Heart left ventricle (tissue), 16 donors: ENCODE measurements at regions of chr1 and their contacts with region 1.

Region 1: DNA sequence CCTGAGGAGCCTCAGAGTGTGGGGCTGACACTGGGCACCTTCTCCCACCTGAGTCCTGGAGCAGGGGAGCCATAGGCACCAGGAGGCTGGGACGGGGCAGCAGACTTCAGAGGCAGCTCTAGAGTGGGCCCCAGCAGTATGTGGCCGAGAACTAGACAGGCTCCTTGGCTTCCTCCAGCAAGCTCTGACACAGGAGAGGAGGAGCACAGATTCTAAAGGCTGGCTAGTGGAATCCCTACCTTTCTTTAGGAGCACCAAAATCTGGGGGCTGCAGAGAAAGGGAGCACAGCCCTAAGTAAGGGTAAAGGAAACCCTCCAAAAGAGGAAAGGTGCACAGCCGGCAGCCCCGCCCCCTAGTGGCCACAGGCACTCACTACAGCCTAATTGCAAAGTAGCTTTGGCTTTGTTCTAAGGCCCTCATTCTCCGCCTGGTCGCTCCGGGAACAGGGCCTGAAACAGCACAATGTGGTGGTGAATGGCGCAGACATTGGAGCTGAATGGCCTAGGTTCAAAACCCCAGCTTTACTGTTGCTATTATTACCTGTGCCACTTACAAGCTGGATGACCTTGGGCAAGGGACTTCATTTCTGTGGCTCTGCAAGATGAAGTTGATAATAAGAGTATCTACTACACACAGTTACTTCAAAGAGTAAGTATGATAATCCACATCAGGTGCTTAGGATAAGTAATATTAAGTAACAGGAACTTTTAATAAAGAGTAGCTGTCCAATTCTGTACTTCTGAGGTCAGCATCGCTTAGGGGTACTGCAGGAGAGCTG is 8.8 kb upstream of the GUCA2A start:
- DNase-seq: peak; percentile 58 to 80 (median 70)
- ATAC-seq: peak; percentile 42 to 63 (median 54)
- H3K4me3 ChIP-seq: no peak overlapping the region
- H3K27ac ChIP-seq: peak overlapping the region; percentile 63 to 95 (median 86)
- H3K4me1 ChIP-seq: peaks cover 8 to 48% (median 37%) of the 10 kb centered on the region in 12 donors
- H3K27me3 ChIP-seq: no peaks in the 10 kb centered on the region
- CTCF ChIP-seq: peak; percentile 91 to 99 (median 98)
- POLR2A ChIP-seq: no peak

Region 2: DNA sequence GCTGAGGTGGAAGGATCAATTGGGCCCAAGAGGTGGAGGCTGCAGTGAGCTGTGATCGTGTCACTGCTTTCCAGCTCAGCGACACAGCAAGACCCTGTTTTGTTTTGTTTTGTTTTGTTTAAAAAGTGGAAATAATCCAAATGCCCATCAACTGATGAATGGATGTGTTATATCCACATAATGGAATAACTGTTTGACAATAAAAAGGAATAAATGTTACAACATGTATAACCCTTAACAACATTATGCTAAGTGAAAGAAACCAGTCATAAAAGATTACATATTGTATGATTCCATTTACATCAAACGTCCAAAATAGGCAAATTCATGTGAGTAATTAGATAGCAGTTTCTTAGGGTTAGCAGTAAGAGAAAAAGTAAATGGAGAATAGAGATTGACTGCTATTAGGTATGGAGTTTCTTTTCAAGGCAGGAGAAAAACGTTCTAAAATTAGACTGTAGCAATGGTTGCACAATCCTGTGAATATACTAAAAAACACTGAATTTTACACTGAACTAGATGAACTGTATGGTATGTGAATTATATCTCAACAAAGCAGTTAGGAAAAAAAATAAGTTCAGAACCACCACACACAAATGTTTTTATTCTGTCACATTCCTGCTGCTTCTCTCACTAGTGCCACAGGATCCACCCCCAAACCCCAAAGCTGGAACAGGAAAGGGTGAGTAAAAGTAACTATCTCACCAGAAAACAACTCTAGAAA is 145.9 kb after region 1 on chr1:
- intact Hi-C with region 1: loop called in 1 of 10 experiments (anchors 5 kb)
- DNase-seq: no peak
- ATAC-seq: peak in 1 of 4 donors; percentile 17
- H3K4me3 ChIP-seq: peak overlapping the region in 1 of 12 donors; percentile 0
- H3K27ac ChIP-seq: peak overlapping the region in 11 of 12 donors; percentile 49 to 81 (median 71)
- H3K4me1 ChIP-seq: peaks cover 9 to 94% (median 73%) of the 10 kb centered on the region in 12 donors
- H3K27me3 ChIP-seq: no peaks in the 10 kb centered on the region
- CTCF ChIP-seq: no peak
- POLR2A ChIP-seq: no peak

Region 3: DNA sequence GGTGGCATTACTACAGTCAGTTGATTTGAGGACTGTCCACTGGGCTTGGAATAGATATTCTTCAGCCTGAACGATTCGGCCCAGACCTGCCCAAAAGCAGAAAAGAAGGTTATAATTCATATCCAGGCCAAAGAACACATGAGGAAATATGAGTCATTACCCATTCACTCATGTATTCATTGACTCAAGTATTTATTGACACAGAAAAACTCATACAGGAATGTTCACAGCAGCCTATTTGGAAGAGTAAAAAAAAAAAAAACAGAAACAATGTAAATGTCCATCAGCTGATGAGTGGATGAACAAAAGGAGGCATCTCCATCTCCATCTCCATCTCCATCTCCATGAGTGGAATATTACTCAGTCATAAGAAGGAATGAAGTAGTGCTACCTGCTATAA is 266.6 kb after region 1 on chr1:
- intact Hi-C with region 1: loop called in 1 of 10 experiments (anchors 10 kb)
- DNase-seq: no peak
- ATAC-seq: no peak
- H3K4me3 ChIP-seq: no peak overlapping the region
- H3K27ac ChIP-seq: no peak overlapping the region
- H3K4me1 ChIP-seq: no peaks in the 10 kb centered on the region
- H3K27me3 ChIP-seq: no peaks in the 10 kb centered on the region
- CTCF ChIP-seq: no peak
- POLR2A ChIP-seq: no peak

Region 4: DNA sequence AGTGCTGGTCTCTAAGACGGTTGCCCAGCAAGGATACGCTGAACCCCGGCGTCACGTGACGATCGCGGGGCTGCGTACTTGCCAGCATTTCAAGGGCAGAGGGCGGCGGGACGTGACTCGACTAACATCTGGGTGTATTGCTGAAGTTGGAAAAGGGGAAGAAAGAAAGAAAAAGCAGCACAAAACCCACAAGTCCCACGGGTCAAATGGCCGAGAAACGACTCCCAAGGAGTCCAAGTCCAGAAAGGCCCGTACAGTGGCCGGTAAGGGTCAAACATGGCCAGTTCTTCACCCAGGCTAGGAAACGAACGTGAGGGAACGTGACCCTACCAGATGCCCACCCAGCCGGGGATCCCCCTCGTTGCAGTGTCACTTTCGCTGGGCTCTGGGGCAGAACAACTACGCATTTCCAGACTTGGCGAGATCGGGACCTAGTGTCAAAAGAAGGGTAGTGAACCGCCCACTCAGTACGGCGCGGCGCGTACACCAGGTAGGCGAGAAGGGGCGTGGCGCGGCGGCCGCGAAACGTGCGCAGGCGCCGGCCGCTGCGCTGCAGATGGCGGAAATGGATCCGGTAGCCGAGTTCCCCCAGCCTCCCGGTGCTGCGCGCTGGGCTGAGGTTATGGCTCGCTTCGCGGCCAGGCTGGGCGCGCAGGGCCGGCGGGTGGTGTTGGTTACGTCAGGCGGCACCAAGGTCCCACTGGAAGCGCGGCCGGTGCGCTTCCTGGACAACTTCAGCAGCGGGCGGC is 282.8 kb after region 1 on chr1 and contains the starts of genes PPCS and ZMYND12:
- intact Hi-C with region 1: loop called in 2 of 10 experiments (anchors 5 to 10 kb)
- DNase-seq: peak; percentile 88 to 92 (median 91)
- ATAC-seq: peak; percentile 94 to 97 (median 96)
- H3K4me3 ChIP-seq: peak within 1 kb of the TSS; percentile 63 to 100 (median 84)
- H3K27ac ChIP-seq: peak within 1 kb of the TSS; percentile 83 to 99 (median 90)
- H3K4me1 ChIP-seq: peaks cover 0 to 25% (median 15%) of the 10 kb centered on the region in 12 donors
- H3K27me3 ChIP-seq: no peaks in the 10 kb centered on the region
- CTCF ChIP-seq: peak in 2 of 12 donors; percentile 5 to 13
- POLR2A ChIP-seq: peak in 1 of 2 donors; percentile 58
- total RNA-seq, gene PPCS: 34.3 to 47.5 (median 37.0) TPM
- total RNA-seq, gene ZMYND12: 0.49 to 3.5 (median 2.3) TPM

Region 5: GRCh38 chr1:42681741-42682483 is 508.6 kb after region 1 on chr1 and contains the start of gene YBX1:
- intact Hi-C with region 1: loop called in 2 of 10 experiments (anchors 10 kb)
- DNase-seq: peak; percentile 96 to 97 (median 97)
- ATAC-seq: peak; percentile 97 to 99 (median 98)
- H3K4me3 ChIP-seq: peak within 1 kb of the TSS; percentile 64 to 99 (median 85)
- H3K27ac ChIP-seq: peak within 1 kb of the TSS; percentile 86 to 100 (median 96)
- H3K4me1 ChIP-seq: peaks cover 21 to 58% (median 44%) of the 10 kb centered on the region in 12 donors
- H3K27me3 ChIP-seq: no peaks in the 10 kb centered on the region
- CTCF ChIP-seq: no peak
- POLR2A ChIP-seq: peak in 1 of 2 donors; percentile 84
- total RNA-seq, gene YBX1: 663 to 1,139 (median 788) TPM